ENCODE measurements at regions of chr21 and their contacts with region 1.

Region 1: GRCh38 chr21:36288651-36289243 is 31.2 kb upstream of the MORC3 start:
- DNase-seq: no peak
- H3K4me3 Mint-ChIP-seq: peak overlapping the region; percentile 45
- H3K27ac Mint-ChIP-seq: peak overlapping the region; percentile 88
- H3K4me1 Mint-ChIP-seq: peaks cover 23% of the 10 kb centered on the region
- H3K27me3 Mint-ChIP-seq: no peaks in the 10 kb centered on the region

Region 2: GRCh38 chr21:36209626-36210171 is 79.0 kb before region 1 on chr21:
- CTCF ChIA-PET with region 1: no interaction called
- POLR2A ChIA-PET with region 1: no interaction called
- intact Hi-C with region 1: no loop called
- DNase-seq: peak; percentile 62
- H3K4me3 Mint-ChIP-seq: no peak overlapping the region
- H3K27ac Mint-ChIP-seq: no peak overlapping the region
- H3K4me1 Mint-ChIP-seq: peaks cover 25% of the 10 kb centered on the region
- H3K27me3 Mint-ChIP-seq: no peaks in the 10 kb centered on the region

Region 3: GRCh38 chr21:36235058-36235582 is 53.6 kb before region 1 on chr21:
- CTCF ChIA-PET with region 1: no interaction called
- POLR2A ChIA-PET with region 1: interaction called, 3 read pairs
- intact Hi-C with region 1: loop called (anchors 1 kb)
- DNase-seq: no peak
- H3K4me3 Mint-ChIP-seq: no peak overlapping the region
- H3K27ac Mint-ChIP-seq: no peak overlapping the region
- H3K4me1 Mint-ChIP-seq: peaks cover 17% of the 10 kb centered on the region
- H3K27me3 Mint-ChIP-seq: no peaks in the 10 kb centered on the region

Region 4: DNA sequence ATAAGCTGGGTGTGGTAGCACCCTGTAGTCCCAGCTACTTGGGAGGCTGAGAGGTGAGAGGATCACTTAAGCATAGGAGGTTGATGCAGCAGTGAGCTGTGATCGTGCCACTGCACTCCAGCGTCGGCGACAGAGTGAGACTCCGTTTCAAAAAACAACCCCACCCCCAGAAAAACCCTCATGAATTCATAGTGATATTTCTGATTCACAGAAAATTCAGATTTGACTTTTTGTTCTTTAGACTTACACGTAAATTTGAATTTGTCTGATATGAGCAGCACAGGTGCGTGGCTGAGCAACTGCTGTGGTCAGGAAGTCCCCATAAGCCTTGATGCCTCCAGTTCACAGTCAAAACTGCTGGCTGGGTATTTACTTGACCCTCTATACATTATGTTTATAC is 21.3 kb after region 1 on chr21:
- CTCF ChIA-PET with region 1: interaction called, 3 read pairs
- POLR2A ChIA-PET with region 1: interaction called, 4 read pairs
- intact Hi-C with region 1: loop called (anchors 1 kb)
- DNase-seq: peak; percentile 86
- H3K4me3 Mint-ChIP-seq: peak overlapping the region; percentile 35
- H3K27ac Mint-ChIP-seq: peak overlapping the region; percentile 82
- H3K4me1 Mint-ChIP-seq: peaks cover 6% of the 10 kb centered on the region
- H3K27me3 Mint-ChIP-seq: no peaks in the 10 kb centered on the region

Region 5: GRCh38 chr21:36576441-36576840 is 287.7 kb after region 1 on chr21:
- CTCF ChIA-PET with region 1: no interaction called
- POLR2A ChIA-PET with region 1: no interaction called
- intact Hi-C with region 1: no loop called
- DNase-seq: no peak
- H3K4me3 Mint-ChIP-seq: no peak overlapping the region
- H3K27ac Mint-ChIP-seq: no peak overlapping the region
- H3K4me1 Mint-ChIP-seq: no peaks in the 10 kb centered on the region
- H3K27me3 Mint-ChIP-seq: peaks cover 4% of the 10 kb centered on the region

Region 6: DNA sequence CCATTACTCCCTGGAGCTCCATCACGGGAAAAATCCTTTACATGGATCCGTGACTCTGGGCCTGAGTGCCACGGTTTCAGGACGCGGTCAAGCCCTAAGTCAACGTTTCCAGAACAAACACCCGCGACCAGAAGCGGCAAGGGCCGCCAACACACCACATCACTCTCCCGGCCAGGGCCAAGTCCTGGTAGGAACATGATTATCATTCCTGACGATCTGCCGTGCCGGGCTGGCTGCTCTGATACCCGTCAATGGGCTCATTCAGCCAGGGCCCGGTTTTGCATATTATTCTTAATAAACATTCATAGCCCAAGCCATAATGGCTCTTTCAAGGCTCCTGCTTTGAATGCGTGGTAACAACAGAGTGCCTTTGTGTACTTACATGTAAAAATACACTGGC is 365.6 kb after region 1 on chr21:
- CTCF ChIA-PET with region 1: no interaction called
- POLR2A ChIA-PET with region 1: no interaction called
- intact Hi-C with region 1: no loop called
- DNase-seq: no peak
- H3K4me3 Mint-ChIP-seq: no peak overlapping the region
- H3K27ac Mint-ChIP-seq: no peak overlapping the region
- H3K4me1 Mint-ChIP-seq: no peaks in the 10 kb centered on the region
- H3K27me3 Mint-ChIP-seq: peaks cover 14% of the 10 kb centered on the region